Activated CD4-positive, alpha-beta memory T cell treated with anti-CD3 and anti-CD28 coated beads for 36 hours (primary cell): ENCODE measurements at regions of chr12 and their contacts with region 1.

Region 1: DNA sequence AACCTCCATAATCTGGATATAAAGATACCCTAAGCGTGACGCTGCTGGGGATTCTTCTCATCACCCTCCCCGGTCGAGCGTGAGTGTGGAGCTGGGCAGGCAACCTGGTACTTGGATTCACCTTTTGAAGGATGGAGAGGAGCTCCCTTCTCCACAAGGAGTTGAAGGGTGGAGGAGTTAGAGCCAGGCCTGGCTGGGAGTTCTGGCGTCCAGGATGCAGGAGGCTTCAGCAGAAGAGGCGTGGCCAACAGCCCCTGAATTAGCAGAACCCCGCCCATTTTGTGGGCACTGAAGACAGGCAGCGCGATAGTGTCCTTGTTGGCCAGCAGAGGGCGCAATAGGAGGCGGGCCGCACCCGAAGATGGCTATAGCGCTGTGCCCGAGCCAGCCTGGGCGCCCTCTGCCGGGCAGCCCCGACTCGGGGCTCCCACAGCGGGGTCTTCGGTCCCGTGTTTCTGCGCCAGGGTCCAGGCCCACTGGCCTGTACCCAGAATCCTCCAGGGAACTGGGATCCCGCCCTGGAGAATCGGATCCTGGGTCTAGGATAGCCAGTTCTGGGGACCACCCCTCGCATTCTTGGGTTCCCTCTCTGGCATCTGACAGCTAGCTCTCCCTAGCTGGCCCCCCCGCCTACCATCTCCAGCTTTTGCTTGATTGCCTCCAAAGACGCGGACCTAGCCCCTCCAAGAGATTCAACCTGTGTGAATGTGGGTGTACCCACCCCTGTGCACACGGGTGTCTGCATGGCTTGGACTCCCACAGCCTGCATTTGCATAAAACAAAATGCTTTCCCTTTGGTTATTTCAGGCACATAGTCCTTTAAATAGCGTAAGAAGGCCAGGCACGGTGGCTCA is 26.0 kb upstream of the SMUG1 start:
- DNase-seq: peak; percentile 94
- H3K4me3 Mint-ChIP-seq: peak overlapping the region; percentile 70
- H3K27ac Mint-ChIP-seq: no peak overlapping the region
- H3K4me1 Mint-ChIP-seq: peaks cover 20% of the 10 kb centered on the region
- H3K27me3 Mint-ChIP-seq: no peaks in the 10 kb centered on the region

Region 2: GRCh38 chr12:54005853-54006686 is 208.7 kb before region 1 on chr12:
- CTCF ChIA-PET with region 1: interaction called, 104 read pairs
- POLR2A ChIA-PET with region 1: no interaction called
- intact Hi-C with region 1: no loop called
- DNase-seq: peak; percentile 89
- H3K4me3 Mint-ChIP-seq: peak overlapping the region; percentile 68
- H3K27ac Mint-ChIP-seq: no peak overlapping the region
- H3K4me1 Mint-ChIP-seq: peaks cover 22% of the 10 kb centered on the region
- H3K27me3 Mint-ChIP-seq: peaks cover 91% of the 10 kb centered on the region

Region 3: GRCh38 chr12:54191550-54192022 is 23.2 kb before region 1 on chr12:
- CTCF ChIA-PET with region 1: interaction called, 65 read pairs
- POLR2A ChIA-PET with region 1: no interaction called
- intact Hi-C with region 1: loop called (anchors 1 kb)
- DNase-seq: peak; percentile 83
- H3K4me3 Mint-ChIP-seq: no peak overlapping the region
- H3K27ac Mint-ChIP-seq: no peak overlapping the region
- H3K4me1 Mint-ChIP-seq: peaks cover 17% of the 10 kb centered on the region
- H3K27me3 Mint-ChIP-seq: peaks cover 24% of the 10 kb centered on the region

Region 4: GRCh38 chr12:54232790-54233189 is 18.0 kb after region 1 on chr12:
- CTCF ChIA-PET with region 1: interaction called, 13 read pairs
- POLR2A ChIA-PET with region 1: no interaction called
- intact Hi-C with region 1: no loop called
- DNase-seq: no peak
- H3K4me3 Mint-ChIP-seq: no peak overlapping the region
- H3K27ac Mint-ChIP-seq: no peak overlapping the region
- H3K4me1 Mint-ChIP-seq: peaks cover 5% of the 10 kb centered on the region
- H3K27me3 Mint-ChIP-seq: no peaks in the 10 kb centered on the region

Region 5: GRCh38 chr12:54388235-54389138 is 173.7 kb after region 1 on chr12:
- CTCF ChIA-PET with region 1: interaction called, 10 read pairs
- POLR2A ChIA-PET with region 1: no interaction called
- intact Hi-C with region 1: no loop called
- DNase-seq: no peak
- H3K4me3 Mint-ChIP-seq: no peak overlapping the region
- H3K27ac Mint-ChIP-seq: no peak overlapping the region
- H3K4me1 Mint-ChIP-seq: peaks cover 14% of the 10 kb centered on the region
- H3K27me3 Mint-ChIP-seq: no peaks in the 10 kb centered on the region